OCI-LY7 (cell line): ENCODE measurements at regions of chr5 and their contacts with region 1.

Region 1: GRCh38 chr5:125298260-125298659 is 551.8 kb upstream of the ZNF608 start:
- DNase-seq: no peak
- H3K4me3 ChIP-seq: no peak overlapping the region
- H3K27ac ChIP-seq: no peak overlapping the region
- H3K4me1 ChIP-seq: peaks cover 8% of the 10 kb centered on the region
- CTCF ChIP-seq: no peak

Region 2: GRCh38 chr5:123813937-123814624 is 1484.2 kb before region 1 on chr5:
- CTCF ChIA-PET with region 1: no interaction called
- POLR2A ChIA-PET with region 1: interaction called, 11 read pairs
- intact Hi-C with region 1: no loop called
- DNase-seq: peak; percentile 22
- H3K4me3 ChIP-seq: no peak overlapping the region
- H3K27ac ChIP-seq: no peak overlapping the region
- H3K4me1 ChIP-seq: peaks cover 19% of the 10 kb centered on the region
- CTCF ChIP-seq: no peak